A549 (cell line): ENCODE measurements at regions of chr12 and their contacts with region 1.

Region 1: GRCh38 chr12:6873094-6874014 is at the start of gene SPSB2:
- DNase-seq: peak; percentile 88 to 98
- ATAC-seq: peak; percentile 65 to 81
- H3K4me3 ChIP-seq: peak within 1 kb of the TSS; percentile 77
- H3K27ac ChIP-seq: peak within 1 kb of the TSS; percentile 93 to 94
- H3K4me1 ChIP-seq: peaks cover 42% of the 10 kb centered on the region
- CTCF ChIP-seq: no peak
- EP300 ChIP-seq: no peak
- POLR2A ChIP-seq: peak; percentile 82
- RAD21 ChIP-seq: peak; percentile 7 to 26; a peak in 3 of 5 replicates
- polyA plus RNA-seq, gene SPSB2: 15.3 and 16.8 TPM in 2 replicates

Region 2: DNA sequence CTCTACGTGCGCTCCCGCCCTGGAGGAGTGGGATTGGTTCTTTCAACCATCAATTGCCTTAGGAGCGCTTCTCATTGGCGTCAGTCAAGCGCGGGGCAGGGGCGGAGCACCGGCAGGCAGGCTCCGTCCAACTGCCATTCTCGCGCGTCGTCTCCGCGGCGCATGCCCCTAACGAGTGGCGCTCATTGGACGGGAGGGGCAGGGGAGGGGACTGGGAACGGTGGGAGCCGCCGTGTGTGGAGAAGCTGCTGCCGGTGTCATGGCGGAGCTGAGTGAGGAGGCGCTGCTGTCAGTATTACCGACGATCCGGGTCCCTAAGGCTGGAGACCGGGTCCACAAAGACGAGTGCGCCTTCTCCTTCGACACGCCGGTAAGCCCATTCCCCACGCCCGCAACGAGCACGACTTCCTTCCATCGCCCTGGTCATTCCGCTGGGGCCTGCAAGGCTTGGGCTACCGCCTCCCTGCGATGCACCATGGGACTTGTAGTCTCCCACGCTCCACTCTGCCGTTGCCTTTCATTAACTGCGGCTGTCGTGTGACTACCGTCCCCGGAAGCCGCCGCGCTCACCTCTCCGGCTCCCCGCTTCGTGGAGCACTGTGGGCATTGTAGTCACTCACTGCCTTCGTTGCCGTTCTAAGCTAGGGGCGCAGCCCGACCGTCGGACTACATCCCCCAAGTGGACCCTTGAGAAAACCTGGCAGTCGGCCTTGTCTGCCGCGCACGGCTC is 21.3 kb before region 1 on chr12 and contains the start of gene USP5:
- CTCF ChIA-PET with region 1: interaction called, 69 read pairs
- POLR2A ChIA-PET with region 1: interaction called, 74 read pairs
- DNase-seq: peak; percentile 99 to 100
- ATAC-seq: peak; percentile 88 to 91
- H3K4me3 ChIP-seq: peak within 1 kb of the TSS; percentile 50
- H3K27ac ChIP-seq: peak within 1 kb of the TSS; percentile 87 to 89
- H3K4me1 ChIP-seq: peaks cover 23% of the 10 kb centered on the region
- CTCF ChIP-seq: no peak
- EP300 ChIP-seq: no peak
- POLR2A ChIP-seq: peak; percentile 80
- RAD21 ChIP-seq: no peak
- polyA plus RNA-seq, gene USP5: 58.6 and 64.5 TPM in 2 replicates

Region 3: DNA sequence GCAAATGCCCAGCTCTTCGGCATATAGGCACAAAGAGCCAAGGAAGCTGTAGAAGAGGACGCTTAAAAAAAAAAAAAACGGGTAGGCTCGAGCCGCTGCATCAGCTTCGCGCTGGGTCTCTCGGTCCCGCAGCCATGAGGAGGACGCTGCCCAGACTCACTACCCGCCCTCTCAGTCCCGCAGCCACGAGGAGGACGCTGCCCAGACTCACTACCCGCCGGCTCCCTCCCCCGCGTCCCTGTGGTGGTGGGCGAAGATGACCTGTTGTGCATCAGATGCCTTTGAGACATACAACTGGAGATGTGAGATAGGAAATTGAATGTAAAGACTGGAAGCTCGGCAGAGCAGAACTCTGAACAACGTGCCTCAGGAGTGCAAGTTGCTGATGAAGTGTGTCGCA is 11.2 kb after region 1 on chr12:
- CTCF ChIA-PET with region 1: interaction called, 399 read pairs
- POLR2A ChIA-PET with region 1: interaction called, 15 read pairs
- DNase-seq: no peak
- ATAC-seq: no peak
- H3K4me3 ChIP-seq: no peak overlapping the region
- H3K27ac ChIP-seq: peak overlapping the region; percentile 84 to 91; a peak in 4 of 6 replicates
- H3K4me1 ChIP-seq: peaks cover 60% of the 10 kb centered on the region
- CTCF ChIP-seq: no peak
- EP300 ChIP-seq: no peak
- POLR2A ChIP-seq: no peak
- RAD21 ChIP-seq: no peak

Region 4: DNA sequence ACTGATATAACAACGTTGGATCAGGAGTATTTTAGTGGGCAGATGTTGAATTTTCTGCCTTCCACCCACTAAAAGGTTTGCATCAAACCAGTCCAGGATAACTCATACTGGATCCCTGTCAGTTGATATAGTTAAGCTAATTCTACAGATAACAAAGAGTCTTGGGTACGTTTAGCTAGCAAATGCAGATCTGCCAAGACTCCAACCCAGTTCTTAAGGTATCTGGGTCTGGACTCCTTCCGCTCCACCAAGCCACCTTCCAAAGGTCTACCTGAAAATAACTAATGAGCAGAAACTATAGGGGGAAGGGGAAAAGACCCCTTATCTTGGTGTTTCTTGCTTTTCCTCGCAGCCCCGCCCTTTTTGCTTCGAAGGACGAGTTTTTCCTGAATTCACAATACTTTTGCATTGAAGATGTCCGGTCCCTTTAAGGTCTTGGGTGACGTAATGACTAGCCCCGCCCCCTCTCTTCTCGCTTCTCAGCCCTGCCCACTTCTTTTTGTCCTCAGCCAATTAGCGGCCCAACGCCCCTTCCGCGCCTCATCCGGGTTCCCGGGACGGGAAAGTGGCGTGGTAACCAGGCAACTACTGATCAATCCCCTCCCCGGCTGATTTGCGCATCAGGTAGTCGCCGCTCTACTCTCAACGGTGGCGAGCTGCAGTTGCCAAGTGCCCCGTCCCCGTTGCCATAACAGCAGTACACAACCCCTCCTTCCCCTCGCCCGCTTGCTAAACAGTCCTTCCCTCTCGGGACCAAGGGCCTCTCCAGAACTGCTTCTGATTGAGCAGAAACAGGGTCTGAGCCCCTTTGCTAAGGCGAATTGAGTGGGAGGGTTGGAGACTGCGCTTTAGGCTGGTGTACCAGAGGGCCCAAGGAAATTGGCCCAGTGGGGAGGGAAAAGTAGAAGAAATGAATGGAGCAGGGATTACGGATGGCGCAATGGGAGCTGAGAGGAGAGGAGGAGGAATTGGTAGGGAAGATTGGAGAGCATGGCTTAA is 31.2 kb after region 1 on chr12 and contains the start of gene LRRC23:
- CTCF ChIA-PET with region 1: interaction called, 232 read pairs
- POLR2A ChIA-PET with region 1: interaction called, 5 read pairs
- DNase-seq: peak; percentile 95 to 98
- ATAC-seq: peak; percentile 94 to 97
- H3K4me3 ChIP-seq: peak within 1 kb of the TSS; percentile 78
- H3K27ac ChIP-seq: peak within 1 kb of the TSS; percentile 82 to 91
- H3K4me1 ChIP-seq: peaks cover 11% of the 10 kb centered on the region; the same call in 2 of the 3 replicates
- CTCF ChIP-seq: no peak
- EP300 ChIP-seq: no peak
- POLR2A ChIP-seq: peak; percentile 71
- RAD21 ChIP-seq: no peak
- polyA plus RNA-seq, gene LRRC23: 33.3 and 40.4 TPM in 2 replicates

Region 5: GRCh38 chr12:6937481-6938297 is 64.3 kb after region 1 on chr12:
- CTCF ChIA-PET with region 1: interaction called, 183 read pairs
- POLR2A ChIA-PET with region 1: interaction called, 30 read pairs
- DNase-seq: peak; percentile 80 to 98
- ATAC-seq: peak; percentile 86 to 93
- H3K4me3 ChIP-seq: peak overlapping the region; percentile 49
- H3K27ac ChIP-seq: peak overlapping the region; percentile 81 to 92
- H3K4me1 ChIP-seq: peaks cover 45% of the 10 kb centered on the region
- CTCF ChIP-seq: peak; percentile 84
- EP300 ChIP-seq: no peak
- POLR2A ChIP-seq: peak; percentile 92
- RAD21 ChIP-seq: peak; percentile 37 to 40; a peak in 4 of 5 replicates

Region 6: DNA sequence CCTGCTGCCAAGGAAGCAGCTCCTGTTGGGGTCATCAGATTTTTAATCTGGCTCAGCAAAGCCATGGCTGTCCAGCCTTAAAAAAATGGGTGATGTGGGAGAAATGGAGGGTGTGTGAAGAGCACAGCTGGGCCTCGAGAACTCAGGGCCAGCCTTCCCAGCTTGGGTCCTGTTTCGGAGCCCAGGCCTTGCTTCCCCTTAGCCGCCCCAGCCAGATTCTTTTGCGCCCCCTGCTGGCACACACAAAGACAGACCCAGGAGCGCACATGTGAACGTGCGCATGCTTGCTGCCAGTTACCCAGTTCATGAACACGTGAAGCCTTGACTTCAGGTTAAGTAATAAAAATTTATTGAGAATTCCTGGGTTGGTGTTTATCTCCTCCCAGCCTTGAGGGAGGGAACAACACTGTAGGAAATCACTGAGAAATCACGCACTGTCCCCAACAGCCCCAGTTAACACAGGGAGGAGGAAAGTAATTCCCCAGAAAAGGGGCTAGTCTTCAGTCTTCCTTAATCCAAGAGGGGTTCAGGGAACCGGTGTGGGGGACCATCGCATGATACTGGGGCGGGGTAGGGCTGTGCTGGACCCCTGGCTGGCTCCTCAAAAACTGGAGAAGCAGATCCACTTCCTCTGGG is 91.8 kb after region 1 on chr12:
- CTCF ChIA-PET with region 1: interaction called, 51 read pairs
- POLR2A ChIA-PET with region 1: interaction called, 5 read pairs
- DNase-seq: peak; percentile 92 to 93
- ATAC-seq: peak; percentile 64 to 77
- H3K4me3 ChIP-seq: no peak overlapping the region
- H3K27ac ChIP-seq: peak overlapping the region; percentile 50 to 99; a peak in 5 of 6 replicates
- H3K4me1 ChIP-seq: peaks cover 51% of the 10 kb centered on the region
- CTCF ChIP-seq: peak; percentile 89
- EP300 ChIP-seq: no peak
- POLR2A ChIP-seq: no peak
- RAD21 ChIP-seq: peak; percentile 59 to 67; a peak in 4 of 5 replicates